HEK293 (cell line): ENCODE measurements at regions of chr9 and their contacts with region 1.

Region 1: DNA sequence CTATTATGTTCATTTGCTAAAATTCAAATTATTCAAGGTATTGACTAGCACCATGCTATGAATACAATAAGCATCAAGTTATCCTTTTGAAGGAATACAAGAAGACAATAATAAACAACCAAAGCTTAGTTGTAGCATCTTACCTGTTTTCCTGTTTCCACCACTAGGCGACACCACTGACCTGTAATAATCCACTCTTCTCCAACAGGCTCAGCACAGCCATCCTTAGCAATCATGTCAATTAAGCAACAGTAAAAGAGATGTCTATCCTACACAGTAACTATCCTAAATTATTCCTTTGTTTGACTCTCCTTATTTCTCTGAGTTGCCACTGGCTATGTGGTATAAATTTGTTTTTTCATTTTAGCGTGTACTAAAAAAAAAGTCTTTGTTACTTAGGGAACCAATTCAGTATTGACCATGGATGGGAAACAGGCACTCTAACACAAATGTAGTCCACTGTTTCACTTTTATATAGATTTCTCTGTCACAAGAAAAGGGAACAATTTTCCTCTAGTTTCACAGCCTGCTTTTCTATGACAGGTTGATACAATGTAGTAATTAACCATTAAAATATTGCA is 46.2 kb downstream of the PCA3 start:
- H3K4me3 ChIP-seq: no peak overlapping the region
- H3K27ac ChIP-seq: no peak overlapping the region
- H3K4me1 ChIP-seq: no peaks in the 10 kb centered on the region
- CTCF ChIP-seq: peak; percentile 33; the same call in 1 of the 2 replicates

Region 2: GRCh38 chr9:76980576-76980975 is 170.1 kb after region 1 on chr9:
- CTCF ChIA-PET with region 1: interaction called, 87 read pairs
- POLR2A ChIA-PET with region 1: no interaction called
- H3K4me3 ChIP-seq: no peak overlapping the region
- H3K27ac ChIP-seq: no peak overlapping the region
- H3K4me1 ChIP-seq: no peaks in the 10 kb centered on the region
- CTCF ChIP-seq: no peak

Region 3: DNA sequence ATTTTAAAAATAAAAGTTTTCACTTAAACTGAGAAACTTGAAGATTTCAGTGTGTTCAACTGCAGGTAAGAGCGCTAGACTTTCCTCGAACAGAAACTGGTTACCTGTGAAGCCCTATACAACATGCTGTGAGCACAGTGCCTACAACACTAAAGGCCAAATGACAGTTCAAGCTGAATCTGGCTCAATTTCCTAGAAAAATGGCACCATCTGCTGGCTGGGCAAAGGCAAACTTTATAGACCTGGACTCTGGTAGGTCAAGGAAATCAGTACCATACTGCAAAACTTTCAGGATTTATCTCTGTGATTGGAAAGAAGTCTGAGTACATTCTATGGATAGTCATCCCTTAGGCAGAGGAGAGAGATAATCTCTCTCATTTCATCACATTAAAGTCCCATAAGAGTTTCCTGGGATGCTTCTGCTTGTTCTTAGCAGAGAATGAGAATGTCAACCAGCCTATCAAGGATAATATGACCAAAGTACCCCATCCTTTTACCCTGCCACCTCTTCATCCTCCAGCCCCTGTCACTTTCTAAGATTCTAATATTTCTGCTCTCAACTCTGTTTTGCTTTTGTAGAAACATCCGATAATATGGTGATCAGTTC is 177.2 kb after region 1 on chr9:
- CTCF ChIA-PET with region 1: interaction called, 87 read pairs
- POLR2A ChIA-PET with region 1: no interaction called
- H3K4me3 ChIP-seq: no peak overlapping the region
- H3K27ac ChIP-seq: no peak overlapping the region
- H3K4me1 ChIP-seq: no peaks in the 10 kb centered on the region
- CTCF ChIP-seq: no peak

Region 4: DNA sequence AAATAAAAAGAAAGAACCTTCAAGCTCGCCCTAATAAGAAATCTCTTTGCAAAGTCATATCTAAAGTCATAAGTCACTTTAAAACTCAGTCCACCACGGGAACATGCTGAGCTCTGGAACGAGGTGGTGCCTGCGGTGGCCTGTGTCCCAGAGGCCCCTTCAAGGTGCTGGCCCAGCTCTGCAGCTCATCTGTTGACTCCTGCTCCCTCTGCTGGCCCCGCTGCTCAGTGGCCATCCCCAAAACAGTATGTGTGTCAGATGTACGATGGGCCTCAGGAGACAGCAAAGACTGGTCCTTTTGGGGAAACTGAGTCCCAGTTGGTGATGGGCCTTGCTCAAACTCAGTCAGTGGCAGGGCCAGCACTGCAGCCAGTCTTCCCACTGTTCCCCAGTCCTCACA is 186.2 kb after region 1 on chr9:
- CTCF ChIA-PET with region 1: interaction called, 92 read pairs
- POLR2A ChIA-PET with region 1: no interaction called
- H3K4me3 ChIP-seq: no peak overlapping the region
- H3K27ac ChIP-seq: no peak overlapping the region
- H3K4me1 ChIP-seq: no peaks in the 10 kb centered on the region
- CTCF ChIP-seq: peak; percentile 45

Region 5: GRCh38 chr9:77149879-77150278 is 339.4 kb after region 1 on chr9:
- CTCF ChIA-PET with region 1: interaction called, 43 read pairs
- POLR2A ChIA-PET with region 1: no interaction called
- H3K4me3 ChIP-seq: no peak overlapping the region
- H3K27ac ChIP-seq: no peak overlapping the region
- H3K4me1 ChIP-seq: no peaks in the 10 kb centered on the region
- CTCF ChIP-seq: no peak